ENCODE measurements at regions of chr5 and their contacts with region 1.

Region 1: DNA sequence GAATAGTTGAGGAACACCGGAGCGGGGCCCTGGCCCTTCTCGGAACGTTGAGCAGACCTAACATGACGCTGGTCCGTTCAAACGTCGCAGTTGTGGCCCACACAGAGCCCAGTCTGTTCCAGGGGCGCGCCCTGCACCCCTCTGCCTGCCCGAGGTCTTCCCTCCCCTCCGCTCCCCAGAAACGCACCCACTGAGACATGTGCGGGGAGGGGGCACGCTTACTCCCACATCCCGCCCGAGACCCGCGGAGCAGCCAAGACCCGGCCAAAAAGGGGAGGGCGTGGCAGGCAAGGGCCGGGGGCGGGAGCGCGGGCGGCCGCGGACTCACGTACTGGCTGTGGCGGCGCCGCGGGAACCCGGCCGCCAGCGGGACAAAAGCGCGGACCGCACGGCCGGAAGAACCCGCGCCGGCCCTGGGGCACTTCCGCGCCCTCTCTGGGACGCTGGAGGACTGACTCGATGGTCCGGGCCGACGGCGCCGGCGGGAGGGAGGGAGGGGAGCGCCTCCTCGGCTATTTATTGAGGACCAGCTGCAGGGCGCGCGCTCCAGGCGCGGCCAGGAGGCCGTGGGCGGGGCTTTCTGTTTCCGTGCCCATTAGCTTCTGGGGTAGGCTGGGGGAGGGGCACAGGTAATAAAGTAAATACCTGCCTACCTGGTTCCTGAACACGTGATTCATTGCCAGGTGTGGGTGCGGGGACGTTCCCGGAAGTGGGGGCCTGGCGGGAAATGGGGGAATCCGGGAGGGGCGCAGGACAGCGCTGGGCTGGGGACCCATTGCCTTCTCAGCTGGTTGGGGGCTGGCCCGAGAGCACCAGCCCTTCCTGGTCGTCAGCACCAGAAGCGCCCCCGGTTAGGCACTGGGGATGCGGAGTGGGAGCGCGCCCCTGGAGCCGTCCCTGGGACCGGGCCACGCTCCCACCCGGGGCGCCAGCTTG is at the start of gene ZFP62:
- DNase-seq: peak; percentile 95
- H3K4me3 Mint-ChIP-seq: peak within 1 kb of the TSS; percentile 84
- H3K27ac Mint-ChIP-seq: peak within 1 kb of the TSS; percentile 89
- H3K4me1 Mint-ChIP-seq: peaks cover 21% of the 10 kb centered on the region
- H3K27me3 Mint-ChIP-seq: no peaks in the 10 kb centered on the region
- CTCF ChIP-seq: no peak
- total RNA-seq, gene ZFP62: 31.2 and 36.9 TPM in 2 replicates

Region 2: GRCh38 chr5:180736536-180736935 is 124.6 kb before region 1 on chr5:
- CTCF ChIA-PET with region 1: no interaction called
- POLR2A ChIA-PET with region 1: no interaction called
- intact Hi-C with region 1: no loop called
- DNase-seq: no peak
- H3K4me3 Mint-ChIP-seq: no peak overlapping the region
- H3K27ac Mint-ChIP-seq: no peak overlapping the region
- H3K4me1 Mint-ChIP-seq: peaks cover 6% of the 10 kb centered on the region
- H3K27me3 Mint-ChIP-seq: peaks cover 60% of the 10 kb centered on the region
- CTCF ChIP-seq: no peak

Region 3: DNA sequence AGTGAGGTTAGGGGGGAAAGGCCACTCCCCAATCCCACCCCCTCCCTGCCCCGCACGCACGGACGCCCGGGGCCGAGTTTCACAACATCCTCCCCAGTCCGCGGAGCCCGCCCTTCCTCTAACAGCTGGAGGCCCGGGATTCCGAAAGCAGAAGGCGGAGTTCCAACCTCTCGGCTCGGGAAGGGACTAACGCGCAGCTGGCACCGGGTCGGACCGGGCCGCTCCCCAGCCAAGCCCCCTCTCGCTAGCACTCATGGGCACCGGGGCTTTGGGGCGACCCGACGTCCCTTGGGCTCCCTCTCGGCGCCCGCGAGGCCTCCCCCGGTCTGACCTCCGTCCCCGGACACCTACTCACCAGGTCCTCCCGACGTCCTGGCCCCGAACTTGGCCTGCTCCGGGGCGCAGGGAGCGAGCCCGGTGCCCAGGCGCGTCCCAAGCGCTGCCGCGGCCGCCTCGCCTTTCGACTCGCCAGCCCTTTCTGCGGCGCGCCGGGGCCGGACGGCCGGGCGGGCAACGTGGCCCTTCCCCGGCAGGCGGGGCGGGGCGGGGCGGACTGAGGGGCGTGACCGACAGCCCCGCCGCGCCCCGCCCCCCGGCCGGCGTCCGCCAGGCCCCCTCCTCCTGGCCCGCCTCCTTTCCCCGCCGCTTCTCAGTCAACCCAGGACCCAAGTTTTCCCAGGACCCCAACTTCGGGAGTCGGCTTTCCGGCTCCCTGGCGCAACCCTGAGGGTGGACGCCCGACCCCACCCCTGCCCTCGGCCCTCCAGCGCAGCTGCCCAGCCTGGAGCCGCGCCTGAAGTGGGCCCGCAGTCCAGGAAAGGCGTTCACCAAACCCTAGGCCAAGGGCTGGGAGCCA is 58.6 kb before region 1 on chr5 and contains the start of gene MGAT1:
- CTCF ChIA-PET with region 1: interaction called, 3 read pairs
- POLR2A ChIA-PET with region 1: interaction called, 67 read pairs
- intact Hi-C with region 1: loop called (anchors 1 kb)
- DNase-seq: peak; percentile 93
- H3K4me3 Mint-ChIP-seq: peak within 1 kb of the TSS; percentile 75
- H3K27ac Mint-ChIP-seq: peak within 1 kb of the TSS; percentile 78
- H3K4me1 Mint-ChIP-seq: peaks cover 61% of the 10 kb centered on the region
- H3K27me3 Mint-ChIP-seq: no peaks in the 10 kb centered on the region
- CTCF ChIP-seq: no peak
- total RNA-seq, gene MGAT1: 135 and 150 TPM in 2 replicates

Region 4: DNA sequence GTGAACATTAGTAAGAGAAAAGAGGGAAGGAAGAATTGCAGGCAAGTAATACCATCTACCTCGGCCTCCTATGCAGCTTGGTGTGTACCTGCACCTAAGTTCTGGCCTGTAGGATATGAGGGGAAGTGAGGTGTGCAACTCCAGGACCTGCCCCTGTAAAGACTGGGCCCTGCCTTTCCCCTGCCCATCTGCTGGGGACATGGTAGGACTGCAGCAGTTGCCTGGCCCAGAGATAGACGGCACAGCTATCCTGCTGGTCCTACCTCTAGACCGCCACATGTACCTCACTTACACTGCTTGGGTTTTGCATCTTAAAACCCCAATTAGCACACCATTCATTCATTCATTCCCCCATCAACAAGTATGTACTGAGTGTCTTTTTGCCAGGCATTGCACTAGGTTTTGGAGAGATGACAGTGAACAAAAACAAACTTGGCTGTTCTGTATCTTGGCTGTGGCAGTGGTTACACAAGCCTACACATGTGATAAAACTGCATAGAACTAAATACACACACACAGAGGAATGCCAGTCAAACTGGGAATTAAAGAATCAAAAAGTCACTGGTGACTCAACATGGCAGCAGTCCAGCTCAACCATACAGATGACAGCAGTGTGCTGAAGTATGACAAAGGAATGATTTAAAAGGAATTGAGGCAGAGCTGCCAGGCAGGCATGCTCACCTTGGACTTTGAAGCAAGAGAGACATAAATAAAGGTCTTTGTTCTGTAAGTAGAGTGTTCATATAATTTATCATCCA is 35.2 kb before region 1 on chr5:
- CTCF ChIA-PET with region 1: interaction called, 4 read pairs
- POLR2A ChIA-PET with region 1: interaction called, 13 read pairs
- intact Hi-C with region 1: loop called (anchors 1 kb)
- DNase-seq: peak; percentile 93
- H3K4me3 Mint-ChIP-seq: no peak overlapping the region
- H3K27ac Mint-ChIP-seq: peak overlapping the region; percentile 5
- H3K4me1 Mint-ChIP-seq: peaks cover 28% of the 10 kb centered on the region
- H3K27me3 Mint-ChIP-seq: no peaks in the 10 kb centered on the region
- CTCF ChIP-seq: no peak

Region 5: GRCh38 chr5:181159286-181159829 is 298.2 kb after region 1 on chr5:
- CTCF ChIA-PET with region 1: interaction called, 39 read pairs
- POLR2A ChIA-PET with region 1: no interaction called
- intact Hi-C with region 1: loop called (anchors 2 kb)
- DNase-seq: peak; percentile 94
- H3K4me3 Mint-ChIP-seq: peak overlapping the region; percentile 66
- H3K27ac Mint-ChIP-seq: peak overlapping the region; percentile 97
- H3K4me1 Mint-ChIP-seq: peaks cover 11% of the 10 kb centered on the region
- H3K27me3 Mint-ChIP-seq: peaks cover 25% of the 10 kb centered on the region
- CTCF ChIP-seq: peak; percentile 97

Measured in MCF 10A (cell line).